H1 (cell line): ENCODE measurements at regions of chr12 and their contacts with region 1.

Region 1: DNA sequence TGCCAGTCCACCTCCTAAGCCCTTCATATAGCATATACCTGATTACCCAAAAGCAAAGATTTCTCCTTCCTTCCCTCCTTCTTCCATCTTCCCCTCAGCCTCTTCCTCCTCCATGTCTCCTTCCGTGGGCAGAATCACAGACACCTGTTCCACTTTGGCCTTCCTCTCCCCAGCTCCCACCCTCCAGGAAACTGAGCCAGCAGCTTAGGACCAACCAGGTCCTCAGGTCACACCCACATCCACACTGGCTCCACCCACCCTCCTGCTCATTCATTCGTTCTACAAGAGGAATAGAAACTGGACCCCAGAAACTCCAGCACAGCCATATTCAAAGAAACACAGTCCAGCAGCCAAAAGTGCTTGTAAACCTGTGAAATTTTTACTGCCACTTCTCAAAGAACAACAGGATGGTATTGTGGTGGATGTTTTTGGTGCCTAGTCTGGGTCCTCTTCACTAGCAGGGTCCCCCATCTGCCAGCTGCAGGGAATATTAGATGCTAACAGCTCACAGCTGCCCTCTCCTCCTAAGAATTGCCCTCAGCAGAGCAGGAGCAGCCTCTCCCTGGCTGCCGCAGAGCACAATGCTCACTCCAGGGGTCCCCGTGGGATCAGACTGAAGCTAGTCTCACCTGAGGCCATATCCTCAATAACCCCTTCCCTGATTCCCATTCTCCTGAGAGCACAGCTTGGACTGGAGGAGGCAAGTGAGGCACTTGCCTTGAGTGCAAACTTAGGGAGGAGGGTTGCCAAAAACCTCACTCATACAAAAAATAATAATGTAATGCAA is 18.4 kb downstream of the CMKLR1 start:
- DNase-seq: no peak
- H3K4me3 ChIP-seq: no peak overlapping the region
- H3K27ac ChIP-seq: no peak overlapping the region
- H3K4me1 ChIP-seq: peaks cover 9 to 34% (median 14%) of the 10 kb centered on the region in 4 experiments
- H3K27me3 ChIP-seq: no peaks in the 10 kb centered on the region
- CTCF ChIP-seq: no peak
- EP300 ChIP-seq: no peak
- POLR2A ChIP-seq: no peak
- RAD21 ChIP-seq: peak in 1 of 2 experiments; percentile 27; a peak in 1 of 4 replicates

Region 2: GRCh38 chr12:107822356-107822755 is 498.3 kb before region 1 on chr12:
- CTCF ChIA-PET with region 1: no interaction called
- POLR2A ChIA-PET with region 1: no interaction called
- DNase-seq: no peak
- H3K4me3 ChIP-seq: no peak overlapping the region; a peak in 1 of 8 replicates
- H3K27ac ChIP-seq: no peak overlapping the region
- H3K4me1 ChIP-seq: peaks cover 0 to 5% (median 0%) of the 10 kb centered on the region in 4 experiments; a peak in 3 of 7 replicates
- H3K27me3 ChIP-seq: no peaks in the 10 kb centered on the region; a peak in 1 of 7 replicates
- CTCF ChIP-seq: no peak
- EP300 ChIP-seq: no peak
- POLR2A ChIP-seq: no peak
- RAD21 ChIP-seq: no peak

Region 3: GRCh38 chr12:108305520-108305919 is 15.2 kb before region 1 on chr12:
- CTCF ChIA-PET with region 1: interaction called, 9 read pairs
- POLR2A ChIA-PET with region 1: interaction called, 15 read pairs
- DNase-seq: no peak
- H3K4me3 ChIP-seq: no peak overlapping the region
- H3K27ac ChIP-seq: no peak overlapping the region
- H3K4me1 ChIP-seq: peaks cover 2 to 26% (median 14%) of the 10 kb centered on the region in 4 experiments
- H3K27me3 ChIP-seq: no peaks in the 10 kb centered on the region
- CTCF ChIP-seq: no peak
- EP300 ChIP-seq: no peak
- POLR2A ChIP-seq: no peak
- RAD21 ChIP-seq: no peak

Region 4: GRCh38 chr12:108337235-108338223 is 16.8 kb after region 1 on chr12:
- CTCF ChIA-PET with region 1: interaction called, 10 read pairs
- POLR2A ChIA-PET with region 1: interaction called, 3 read pairs
- DNase-seq: peak in 1 of 2 experiments; percentile 58
- H3K4me3 ChIP-seq: no peak overlapping the region
- H3K27ac ChIP-seq: no peak overlapping the region
- H3K4me1 ChIP-seq: peaks cover 0 to 9% (median 5%) of the 10 kb centered on the region in 4 experiments; a peak in 4 of 7 replicates
- H3K27me3 ChIP-seq: no peaks in the 10 kb centered on the region
- CTCF ChIP-seq: peak; percentile 36 to 77 (median 52)
- EP300 ChIP-seq: no peak
- POLR2A ChIP-seq: no peak
- RAD21 ChIP-seq: peak; percentile 42 to 66

Region 5: DNA sequence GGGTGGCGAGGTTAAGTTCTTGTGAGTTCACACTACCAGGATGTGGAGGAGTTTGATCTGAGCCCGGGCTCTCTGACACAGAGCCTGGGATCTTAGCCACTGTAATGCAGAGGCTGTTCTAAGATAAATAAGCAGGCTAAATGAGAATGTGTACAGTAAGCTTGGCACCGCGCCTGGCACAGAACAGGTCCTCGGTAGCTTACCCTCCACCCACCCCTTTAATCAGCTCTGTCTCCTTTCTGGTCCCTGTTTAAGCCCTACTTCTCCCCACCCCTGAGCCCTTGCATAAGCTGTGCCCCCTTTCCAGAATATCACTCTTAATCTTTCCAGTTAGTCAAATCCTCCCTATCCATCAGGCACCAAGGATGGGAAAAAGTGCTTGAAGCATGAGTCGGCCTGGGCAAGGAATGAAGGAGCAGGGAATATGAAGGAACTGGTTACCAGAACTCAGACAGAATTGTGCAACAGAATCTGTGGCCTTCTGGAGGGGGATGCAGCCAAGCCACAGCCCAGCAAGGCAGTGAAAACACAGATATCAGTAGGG is 51.2 kb after region 1 on chr12:
- CTCF ChIA-PET with region 1: interaction called, 11 read pairs
- POLR2A ChIA-PET with region 1: no interaction called
- DNase-seq: no peak
- H3K4me3 ChIP-seq: no peak overlapping the region
- H3K27ac ChIP-seq: no peak overlapping the region
- H3K4me1 ChIP-seq: peaks cover 0 to 6% (median 0%) of the 10 kb centered on the region in 4 experiments; a peak in 1 of 7 replicates
- H3K27me3 ChIP-seq: no peaks in the 10 kb centered on the region
- CTCF ChIP-seq: no peak
- EP300 ChIP-seq: no peak
- POLR2A ChIP-seq: no peak
- RAD21 ChIP-seq: no peak